Activated CD4-positive, alpha-beta T cell treated with anti-CD3 and anti-CD28 coated beads, Interleukin-2, amount 10 ng/mL, durations not matched to agents 24 days and 14 days (primary cell): ENCODE measurements at regions of chr11 and their contacts with region 1.

Region 1: DNA sequence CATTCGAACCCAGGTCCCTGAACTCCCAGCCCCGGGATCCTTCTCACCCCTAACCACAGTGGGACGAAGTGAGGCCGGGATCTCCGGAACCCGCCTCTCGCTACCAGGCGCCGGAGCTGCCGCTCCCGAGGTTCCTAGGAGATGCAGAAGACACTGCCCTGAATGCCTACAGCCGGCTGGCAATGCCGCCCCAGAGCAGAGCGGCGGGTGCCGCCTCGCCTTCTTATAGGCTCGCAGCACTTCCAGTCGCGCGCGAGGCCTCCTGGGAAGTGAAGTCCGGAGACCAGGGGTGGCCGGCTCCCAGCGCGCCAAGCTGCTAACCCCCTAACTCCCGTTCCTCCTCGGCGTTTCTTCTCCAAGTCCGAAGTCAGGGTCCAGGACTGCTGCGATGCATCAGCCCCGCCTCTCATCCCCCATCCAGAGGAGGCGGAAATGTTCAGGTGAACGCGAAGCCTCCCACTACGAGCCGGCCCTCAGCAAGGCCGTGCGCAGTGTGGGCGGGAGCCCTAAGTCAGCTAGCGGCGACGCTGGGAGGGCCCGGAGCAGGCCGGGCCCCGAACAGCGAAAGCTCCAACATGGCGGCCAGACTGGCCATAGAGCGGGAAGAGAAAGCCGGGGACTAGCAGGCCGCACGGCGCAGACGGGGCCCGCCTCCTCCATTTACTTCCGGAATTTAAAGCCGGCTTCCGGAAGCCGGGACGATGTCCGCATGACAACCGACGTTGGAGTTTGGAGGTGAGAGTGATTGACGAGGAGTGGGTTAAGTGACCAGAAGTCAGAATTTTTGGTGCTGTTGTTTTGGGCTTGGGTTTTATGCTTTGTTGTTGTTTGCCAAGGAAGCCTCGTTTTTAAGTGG is at the starts of genes CYB561A3 and TMEM138:
- DNase-seq: peak; percentile 97
- H3K4me3 Mint-ChIP-seq: peak within 1 kb of the TSS; percentile 96
- H3K27ac Mint-ChIP-seq: peak within 1 kb of the TSS; percentile 95
- H3K4me1 Mint-ChIP-seq: peaks cover 26% of the 10 kb centered on the region
- H3K27me3 Mint-ChIP-seq: no peaks in the 10 kb centered on the region
- total RNA-seq, gene CYB561A3: 34.9 and 35.1 TPM in 2 replicates
- total RNA-seq, gene TMEM138: 65.2 and 69.9 TPM in 2 replicates

Region 2: GRCh38 chr11:61294717-61295595 is 67.0 kb before region 1 on chr11 and contains the start of gene VWCE:
- intact Hi-C with region 1: loop called (anchors 1 kb)
- DNase-seq: peak; percentile 92
- H3K4me3 Mint-ChIP-seq: peak within 1 kb of the TSS; percentile 89
- H3K27ac Mint-ChIP-seq: peak within 1 kb of the TSS; percentile 89
- H3K4me1 Mint-ChIP-seq: peaks cover 23% of the 10 kb centered on the region
- H3K27me3 Mint-ChIP-seq: peaks cover 13% of the 10 kb centered on the region
- total RNA-seq, gene VWCE: 10.6 and 12.4 TPM in 2 replicates

Region 3: DNA sequence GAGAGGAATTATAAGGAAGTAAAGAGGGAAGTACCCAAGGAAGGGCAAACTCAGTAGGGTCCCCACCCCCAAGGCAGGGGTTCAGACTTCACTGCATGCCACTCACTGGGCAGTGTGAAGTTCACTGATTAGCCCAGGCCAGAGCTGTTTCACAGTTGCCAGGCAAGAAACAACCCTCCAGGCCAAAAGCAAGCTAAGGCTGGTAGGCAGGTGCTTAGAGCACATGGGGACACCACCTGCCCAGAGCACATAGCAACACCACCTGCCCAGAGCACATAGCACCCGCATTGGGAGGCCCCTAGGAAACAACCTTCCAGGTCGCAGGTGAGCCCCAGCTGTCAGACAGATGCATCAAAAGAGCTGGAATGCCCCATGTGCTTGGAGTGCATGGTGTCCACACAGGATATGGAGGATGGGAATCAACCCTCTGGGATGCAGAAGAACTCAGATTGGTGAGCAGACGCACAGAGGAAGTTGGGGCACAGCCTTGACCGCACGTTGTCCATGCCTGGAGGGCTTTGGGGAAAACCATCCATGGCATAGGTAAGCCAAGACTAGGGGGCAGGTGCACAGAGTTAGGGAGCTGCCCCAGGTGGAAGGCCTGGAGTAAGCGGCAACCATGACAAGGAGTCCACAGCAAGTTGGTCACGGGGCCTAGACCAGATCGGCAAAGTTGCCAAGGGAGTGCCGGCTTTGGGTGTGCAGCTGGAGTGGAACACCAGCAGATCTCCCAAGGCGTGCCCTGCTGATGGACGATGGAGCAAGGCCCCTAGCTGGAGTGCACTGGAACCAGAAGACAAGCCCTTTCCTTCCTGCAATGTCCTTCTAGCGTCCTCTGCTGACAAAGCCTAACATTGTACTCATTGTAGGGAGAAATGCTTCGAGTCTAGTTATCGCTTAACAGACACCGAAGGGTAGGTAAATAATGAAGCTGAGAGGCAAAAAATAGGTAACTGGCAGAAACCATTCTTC is 22.6 kb after region 1 on chr11:
- intact Hi-C with region 1: loop called (anchors 1 kb)
- DNase-seq: no peak
- H3K4me3 Mint-ChIP-seq: no peak overlapping the region
- H3K27ac Mint-ChIP-seq: no peak overlapping the region
- H3K4me1 Mint-ChIP-seq: peaks cover 6% of the 10 kb centered on the region
- H3K27me3 Mint-ChIP-seq: no peaks in the 10 kb centered on the region

Region 4: GRCh38 chr11:61392981-61393595 is 31.2 kb after region 1 on chr11:
- intact Hi-C with region 1: loop called (anchors 2 kb)
- DNase-seq: peak; percentile 68
- H3K4me3 Mint-ChIP-seq: peak overlapping the region; percentile 91
- H3K27ac Mint-ChIP-seq: peak overlapping the region; percentile 92
- H3K4me1 Mint-ChIP-seq: peaks cover 18% of the 10 kb centered on the region
- H3K27me3 Mint-ChIP-seq: no peaks in the 10 kb centered on the region

Region 5: DNA sequence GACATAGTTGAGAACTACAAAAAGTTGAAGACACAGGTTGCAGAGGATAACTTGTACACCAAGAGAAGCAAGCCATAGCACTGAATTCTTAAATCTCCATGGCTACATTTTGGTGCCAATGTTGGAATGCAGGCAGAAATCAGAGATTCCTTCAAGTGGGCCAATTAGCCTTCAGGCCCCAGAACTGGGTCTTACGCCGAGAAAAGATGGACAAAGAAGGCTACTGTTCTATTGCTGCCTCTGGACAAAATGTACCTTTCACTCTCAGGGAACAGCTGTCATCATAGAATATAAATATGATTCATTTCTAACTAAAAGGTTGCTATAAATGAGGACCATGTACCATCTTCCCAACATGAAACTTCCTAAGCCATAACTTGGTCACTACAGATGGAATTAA is 44.2 kb after region 1 on chr11:
- intact Hi-C with region 1: no loop called
- DNase-seq: no peak
- H3K4me3 Mint-ChIP-seq: no peak overlapping the region
- H3K27ac Mint-ChIP-seq: no peak overlapping the region
- H3K4me1 Mint-ChIP-seq: peaks cover 4% of the 10 kb centered on the region
- H3K27me3 Mint-ChIP-seq: no peaks in the 10 kb centered on the region

Region 6: DNA sequence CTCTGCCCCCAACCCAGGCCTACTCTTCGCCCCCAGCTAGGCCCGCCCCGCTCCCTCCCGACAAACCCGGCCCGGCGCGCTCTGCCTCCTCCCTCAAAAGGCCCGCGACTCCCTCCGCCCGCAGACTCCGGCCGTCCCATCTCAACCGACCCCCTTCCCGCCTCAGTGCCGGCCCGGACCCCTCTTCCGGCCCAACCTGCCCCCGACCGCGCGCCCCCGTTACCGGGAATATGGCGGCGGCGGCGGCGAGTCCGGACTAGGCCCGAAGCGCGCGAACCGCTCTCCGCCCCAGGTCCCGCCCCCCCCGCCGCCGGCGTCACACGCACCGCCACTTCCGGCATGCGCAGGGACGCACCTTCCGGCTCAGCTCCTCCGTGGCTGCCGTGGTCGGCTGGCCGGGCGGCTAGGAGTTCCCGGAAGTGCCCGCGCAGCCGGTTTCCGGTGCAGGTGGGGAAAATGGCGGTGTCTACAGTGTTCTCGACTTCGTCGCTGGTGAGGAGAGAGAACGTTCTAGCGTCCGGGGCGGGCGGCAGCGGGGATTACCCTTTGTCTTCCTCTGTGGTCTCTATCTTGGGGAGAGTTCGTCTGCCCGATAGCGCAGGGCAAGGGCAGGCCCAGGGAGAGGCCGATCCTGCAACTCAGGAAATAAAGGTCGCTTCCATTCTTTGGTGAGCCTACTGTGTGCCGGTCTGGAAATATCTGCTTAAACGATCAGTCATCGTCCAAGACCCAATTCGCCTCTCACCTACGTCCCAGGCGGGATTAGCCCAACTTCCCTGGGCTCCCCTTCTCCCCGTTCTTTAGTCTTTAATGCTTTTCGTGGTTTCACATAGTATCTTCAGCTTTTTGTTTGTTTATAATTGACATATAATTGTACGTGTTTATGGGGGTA is 68.0 kb after region 1 on chr11 and contains the starts of genes CPSF7 and SDHAF2:
- intact Hi-C with region 1: loop called (anchors 1 kb)
- DNase-seq: peak; percentile 99
- H3K4me3 Mint-ChIP-seq: peak within 1 kb of the TSS; percentile 97
- H3K27ac Mint-ChIP-seq: peak within 1 kb of the TSS; percentile 98
- H3K4me1 Mint-ChIP-seq: peaks cover 43% of the 10 kb centered on the region
- H3K27me3 Mint-ChIP-seq: no peaks in the 10 kb centered on the region
- total RNA-seq, gene CPSF7: 140 and 143 TPM in 2 replicates
- total RNA-seq, gene SDHAF2: 46.0 and 46.1 TPM in 2 replicates

Region 7: GRCh38 chr11:61834278-61835048 is 472.5 kb after region 1 on chr11:
- intact Hi-C with region 1: no loop called
- DNase-seq: peak; percentile 92
- H3K4me3 Mint-ChIP-seq: peak overlapping the region; percentile 71
- H3K27ac Mint-ChIP-seq: peak overlapping the region; percentile 93
- H3K4me1 Mint-ChIP-seq: peaks cover 59% of the 10 kb centered on the region
- H3K27me3 Mint-ChIP-seq: no peaks in the 10 kb centered on the region